CD8-positive, alpha-beta T cell (primary cell): ENCODE measurements at regions of chr3 and their contacts with region 1.

Region 1: GRCh38 chr3:160860346-160860745 is 104.3 kb downstream of the PPM1L start:
- DNase-seq: no peak
- ATAC-seq: no peak
- H3K4me3 ChIP-seq: no peak overlapping the region
- H3K4me3 Mint-ChIP-seq: no peak overlapping the region
- H3K27ac ChIP-seq: no peak overlapping the region
- H3K27ac Mint-ChIP-seq: no peak overlapping the region
- H3K4me1 ChIP-seq: no peaks in the 10 kb centered on the region
- H3K4me1 Mint-ChIP-seq: no peaks in the 10 kb centered on the region
- H3K27me3 ChIP-seq: no peaks in the 10 kb centered on the region
- H3K27me3 Mint-ChIP-seq: peaks cover 2% of the 10 kb centered on the region
- CTCF ChIP-seq: no peak

Region 2: GRCh38 chr3:159583662-159584061 is 1276.7 kb before region 1 on chr3:
- CTCF ChIA-PET with region 1: no interaction called
- POLR2A ChIA-PET with region 1: no interaction called
- intact Hi-C with region 1: loop called in 1 of 2 experiments (anchors 5 kb)
- DNase-seq: no peak
- ATAC-seq: no peak
- H3K4me3 ChIP-seq: no peak overlapping the region
- H3K4me3 Mint-ChIP-seq: no peak overlapping the region
- H3K27ac ChIP-seq: no peak overlapping the region
- H3K27ac Mint-ChIP-seq: no peak overlapping the region
- H3K4me1 ChIP-seq: no peaks in the 10 kb centered on the region
- H3K4me1 Mint-ChIP-seq: no peaks in the 10 kb centered on the region
- H3K27me3 ChIP-seq: no peaks in the 10 kb centered on the region
- H3K27me3 Mint-ChIP-seq: no peaks in the 10 kb centered on the region
- CTCF ChIP-seq: no peak